Activated naive CD4-positive, alpha-beta T cell treated with anti-CD3 and anti-CD28 coated beads for 36 hours (primary cell): ENCODE measurements at regions of chr17 and their contacts with region 1.

Region 1: DNA sequence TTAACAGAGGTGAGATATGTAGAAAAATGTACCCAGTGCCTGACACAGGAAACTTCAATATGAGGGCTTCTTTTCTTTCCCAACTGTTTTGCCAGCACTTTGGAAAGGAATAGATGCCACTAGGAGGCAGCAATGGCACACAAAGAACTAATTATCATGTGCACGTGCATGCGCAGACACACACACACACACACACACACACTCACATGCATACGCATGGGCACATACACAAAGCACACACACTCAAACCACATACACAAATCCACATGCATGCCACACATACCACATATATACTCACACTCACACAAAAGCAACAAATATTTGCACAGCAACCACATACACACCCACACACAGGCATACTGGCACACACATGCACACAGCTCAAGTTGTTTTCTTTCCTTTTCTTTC is 8.8 kb upstream of the CEP112 start:
- DNase-seq: peak; percentile 76
- H3K4me3 Mint-ChIP-seq: no peak overlapping the region
- H3K27ac Mint-ChIP-seq: no peak overlapping the region
- H3K4me1 Mint-ChIP-seq: peaks cover 16% of the 10 kb centered on the region
- H3K27me3 Mint-ChIP-seq: no peaks in the 10 kb centered on the region

Region 2: DNA sequence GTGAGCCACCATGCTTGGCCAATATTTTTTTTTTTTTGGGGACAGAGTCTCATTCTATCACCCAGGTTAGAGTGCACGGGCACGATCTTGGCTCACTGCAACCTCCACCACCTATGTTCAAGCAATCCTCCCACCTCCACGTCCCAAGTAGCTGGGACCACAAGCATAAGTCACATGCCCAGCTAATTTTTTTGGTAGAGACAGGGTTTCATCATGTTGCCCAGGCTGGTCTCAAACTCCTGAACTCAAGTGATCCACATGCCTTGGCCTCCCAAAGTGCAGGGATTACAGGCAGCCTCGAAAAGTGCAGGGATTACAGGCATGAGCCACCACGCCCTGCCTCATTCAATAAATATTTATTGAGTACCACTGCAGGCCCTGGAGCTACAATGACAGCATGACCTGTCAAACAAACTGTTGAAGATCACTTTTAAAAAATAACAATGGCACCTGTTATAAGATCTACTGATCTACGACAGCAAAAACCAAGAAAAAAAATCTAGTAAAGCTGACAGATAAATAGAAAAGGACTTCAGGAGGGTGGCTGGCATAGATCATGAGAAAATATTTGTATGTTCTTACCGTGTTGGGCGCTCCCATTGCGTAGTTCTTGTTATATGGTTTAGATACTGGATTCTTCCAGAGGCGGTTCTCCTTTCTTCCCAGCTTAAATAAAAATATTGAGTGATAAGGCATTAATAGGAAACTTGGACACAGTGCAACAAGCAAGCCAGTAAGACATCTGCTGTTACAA is 1617.6 kb before region 1 on chr17:
- CTCF ChIA-PET with region 1: no interaction called
- intact Hi-C with region 1: no loop called
- DNase-seq: no peak
- H3K4me3 Mint-ChIP-seq: no peak overlapping the region
- H3K27ac Mint-ChIP-seq: no peak overlapping the region
- H3K4me1 Mint-ChIP-seq: peaks cover 13% of the 10 kb centered on the region
- H3K27me3 Mint-ChIP-seq: no peaks in the 10 kb centered on the region

Region 3: GRCh38 chr17:66211047-66211799 is 10.5 kb after region 1 on chr17:
- CTCF ChIA-PET with region 1: interaction called, 17 read pairs
- intact Hi-C with region 1: no loop called
- DNase-seq: no peak
- H3K4me3 Mint-ChIP-seq: no peak overlapping the region
- H3K27ac Mint-ChIP-seq: no peak overlapping the region
- H3K4me1 Mint-ChIP-seq: no peaks in the 10 kb centered on the region
- H3K27me3 Mint-ChIP-seq: no peaks in the 10 kb centered on the region

Region 4: GRCh38 chr17:66301797-66302741 is 101.4 kb after region 1 on chr17 and contains the start of gene PRKCA:
- CTCF ChIA-PET with region 1: interaction called, 6 read pairs
- intact Hi-C with region 1: loop called (anchors 5 kb)
- DNase-seq: peak; percentile 60
- H3K4me3 Mint-ChIP-seq: peak within 1 kb of the TSS; percentile 100
- H3K27ac Mint-ChIP-seq: peak within 1 kb of the TSS; percentile 95
- H3K4me1 Mint-ChIP-seq: peaks cover 28% of the 10 kb centered on the region
- H3K27me3 Mint-ChIP-seq: no peaks in the 10 kb centered on the region
- total RNA-seq, gene PRKCA: 78.4 to 79.7 TPM

Region 5: DNA sequence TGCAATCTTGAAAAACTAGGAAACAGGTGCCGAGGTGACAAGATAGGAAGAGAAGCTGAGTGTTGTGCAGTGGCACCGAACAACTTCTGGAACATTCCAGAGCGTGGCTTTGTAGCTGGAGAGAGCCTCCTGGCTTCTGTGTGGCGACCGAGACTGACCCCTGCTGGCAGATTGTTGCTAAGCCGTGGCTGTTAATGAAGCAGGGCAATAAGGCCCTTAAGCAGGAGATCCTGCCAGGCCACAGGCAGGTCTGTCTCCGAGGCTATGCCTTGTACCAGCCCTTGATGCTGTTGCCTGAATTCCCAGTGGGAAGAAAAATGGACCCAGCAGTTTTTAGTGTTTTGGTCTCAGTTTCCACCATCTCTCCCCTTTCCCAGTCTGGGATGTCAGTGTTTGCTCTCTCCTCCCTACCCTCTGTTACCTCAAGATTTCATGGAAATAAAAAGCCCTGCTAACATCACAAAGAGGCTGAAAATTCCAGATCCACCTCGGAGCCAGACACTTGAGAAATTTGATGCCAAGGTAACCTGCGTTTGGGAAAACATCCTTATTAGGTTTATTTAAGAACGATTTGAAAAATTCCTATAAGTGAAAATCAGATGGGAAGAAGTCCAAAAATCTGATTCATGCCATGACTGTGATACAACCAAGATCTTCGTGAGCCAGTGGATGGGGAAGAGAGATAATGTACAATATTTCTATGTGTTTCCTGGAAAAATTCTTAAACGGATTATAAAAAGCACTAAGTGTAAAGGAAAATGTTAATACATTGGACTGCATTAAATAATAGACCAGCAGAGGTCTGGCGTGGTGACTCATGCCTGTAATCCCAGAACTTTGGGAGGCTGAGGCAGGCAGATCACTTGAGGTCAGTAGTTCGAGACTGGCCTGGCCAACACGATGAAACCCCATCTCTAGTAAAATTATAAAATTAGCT is 366.8 kb after region 1 on chr17:
- CTCF ChIA-PET with region 1: interaction called, 5 read pairs
- intact Hi-C with region 1: loop called (anchors 1 kb)
- DNase-seq: peak; percentile 89
- H3K4me3 Mint-ChIP-seq: no peak overlapping the region
- H3K27ac Mint-ChIP-seq: no peak overlapping the region
- H3K4me1 Mint-ChIP-seq: peaks cover 48% of the 10 kb centered on the region
- H3K27me3 Mint-ChIP-seq: no peaks in the 10 kb centered on the region

Region 6: DNA sequence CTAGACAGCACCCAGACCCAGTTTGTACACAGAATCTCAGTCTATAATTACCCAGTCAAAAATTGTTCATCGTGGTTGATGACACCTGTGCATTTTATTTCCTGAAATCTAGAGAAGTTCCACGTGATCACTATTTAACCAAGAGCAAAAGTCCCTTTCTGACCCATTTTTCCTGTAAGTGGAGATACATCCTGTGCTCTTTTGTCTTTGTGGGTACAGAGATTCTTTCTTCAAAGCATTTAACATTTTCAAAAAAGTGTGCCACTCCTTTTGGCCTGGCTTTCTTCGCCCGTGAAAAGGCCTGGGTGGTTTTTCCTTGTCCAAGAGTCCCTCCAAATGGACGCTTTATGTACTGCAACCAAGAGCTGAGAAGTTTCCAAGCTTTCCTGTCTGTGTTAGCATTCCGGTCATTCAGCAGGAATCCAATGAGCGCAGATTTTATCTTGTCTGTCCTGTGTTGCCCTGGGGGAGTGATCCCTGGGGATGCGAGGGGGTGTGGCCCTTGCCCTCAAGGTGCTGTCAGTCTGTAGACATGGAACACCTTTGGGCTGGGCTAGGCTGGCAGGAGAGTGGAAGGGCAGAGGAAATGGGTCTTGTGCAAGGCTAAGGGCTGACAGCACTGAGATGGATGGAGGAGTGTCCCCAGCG is 473.1 kb after region 1 on chr17:
- CTCF ChIA-PET with region 1: interaction called, 3 read pairs
- intact Hi-C with region 1: loop called (anchors 2 kb)
- DNase-seq: peak; percentile 72
- H3K4me3 Mint-ChIP-seq: peak overlapping the region; percentile 20
- H3K27ac Mint-ChIP-seq: peak overlapping the region; percentile 88
- H3K4me1 Mint-ChIP-seq: peaks cover 77% of the 10 kb centered on the region
- H3K27me3 Mint-ChIP-seq: no peaks in the 10 kb centered on the region

Region 7: DNA sequence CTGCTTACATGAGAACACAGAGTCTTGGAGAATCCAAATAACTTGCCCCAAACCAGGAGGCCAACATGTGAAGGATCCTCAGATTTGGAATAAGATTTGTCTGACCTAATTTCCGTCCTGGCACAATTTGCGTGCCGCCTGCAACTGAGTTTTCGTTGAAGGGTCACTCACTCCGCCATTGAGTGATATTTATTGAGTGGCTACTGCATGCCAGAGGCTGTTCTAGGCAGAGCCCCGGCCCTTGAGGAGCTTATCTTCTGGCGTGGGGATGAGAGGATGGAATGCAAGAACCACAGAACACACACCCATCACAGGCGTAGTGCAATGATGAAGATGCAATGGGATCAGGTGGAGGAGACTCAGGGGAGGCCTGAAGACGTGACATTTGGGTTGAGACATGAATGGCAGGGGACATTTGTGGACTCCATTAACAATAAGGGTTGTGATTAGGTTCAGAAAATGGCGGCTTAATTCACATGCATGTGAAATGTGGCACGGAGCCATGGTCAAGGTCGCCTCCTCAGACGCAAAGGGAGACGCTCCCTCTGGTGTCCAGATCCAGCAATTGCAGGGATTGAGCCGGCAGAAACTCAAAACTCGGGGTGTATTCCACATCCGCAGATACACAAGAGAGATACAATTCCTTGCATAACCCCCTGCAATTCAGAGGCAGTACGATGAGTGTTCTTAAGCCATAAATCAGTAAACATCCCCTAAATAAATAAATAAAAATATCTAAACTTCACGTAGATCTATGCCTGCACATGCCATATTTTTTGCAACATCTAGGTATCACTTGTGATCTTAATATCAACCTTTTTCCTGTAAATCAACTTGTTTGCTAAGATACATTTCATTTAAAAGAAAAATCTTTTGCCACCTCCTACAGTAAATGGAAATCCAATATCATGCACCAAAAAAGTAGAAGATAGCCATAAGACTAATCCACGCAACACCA is 705.9 kb after region 1 on chr17:
- CTCF ChIA-PET with region 1: interaction called, 14 read pairs
- intact Hi-C with region 1: loop called (anchors 1 kb)
- DNase-seq: peak; percentile 85
- H3K4me3 Mint-ChIP-seq: no peak overlapping the region
- H3K27ac Mint-ChIP-seq: no peak overlapping the region
- H3K4me1 Mint-ChIP-seq: peaks cover 4% of the 10 kb centered on the region
- H3K27me3 Mint-ChIP-seq: no peaks in the 10 kb centered on the region